ENCODE measurements at regions of chr11 and their contacts with region 1.

Region 1: DNA sequence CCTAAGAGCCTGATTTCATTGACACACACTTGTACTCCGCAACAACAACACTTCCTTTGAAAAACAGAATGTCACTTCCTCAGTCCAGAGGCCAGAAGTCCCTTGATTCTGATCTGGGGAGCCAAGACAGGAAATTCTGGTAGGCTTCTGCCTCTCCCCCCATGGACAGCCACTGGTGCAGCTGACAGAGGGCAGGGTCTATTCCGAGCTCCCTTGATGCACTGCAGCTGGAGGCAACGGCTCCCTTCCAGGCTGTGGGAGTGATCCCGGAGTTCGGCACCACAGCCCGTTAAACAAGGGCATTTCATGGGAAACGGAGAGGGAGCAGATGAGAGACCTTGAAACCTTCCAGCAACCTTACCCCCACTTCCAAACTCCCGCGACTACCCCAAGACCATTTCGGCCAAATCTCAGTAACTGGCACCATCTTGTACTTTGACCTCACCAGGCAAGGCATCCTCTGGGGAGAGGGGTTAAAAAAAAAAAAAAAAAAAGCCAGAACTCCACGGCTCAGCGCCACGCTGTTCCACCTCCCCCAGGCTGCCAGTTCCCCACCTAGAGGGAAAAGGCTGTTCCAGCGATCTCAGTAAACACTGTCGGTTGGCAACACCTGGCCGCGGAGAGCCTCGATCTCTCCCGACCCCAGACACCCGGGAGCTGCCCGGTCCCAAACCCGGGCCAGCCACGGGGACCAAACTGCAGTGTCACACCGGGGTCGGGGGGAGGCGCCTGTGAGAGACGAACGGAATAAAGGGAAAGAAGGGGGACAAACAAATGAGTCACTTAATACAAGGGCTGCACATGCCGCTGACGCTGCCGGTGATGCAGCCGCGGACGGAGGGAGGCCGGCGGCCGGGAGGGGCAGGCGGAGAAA is 1.1 kb downstream of the GAB2 start:
- DNase-seq: peak; percentile 93

Region 2: GRCh38 chr11:78139422-78140391 is 276.8 kb before region 1 on chr11 and contains the start of gene ALG8:
- intact Hi-C with region 1: loop called (anchors 5 kb)
- DNase-seq: peak; percentile 98
- total RNA-seq, gene ALG8: 15.4 TPM

Region 3: GRCh38 chr11:78168539-78169477 is 247.7 kb before region 1 on chr11:
- intact Hi-C with region 1: loop called (anchors 5 kb)
- DNase-seq: peak; percentile 91

Region 4: GRCh38 chr11:78228467-78228866 is 188.1 kb before region 1 on chr11:
- intact Hi-C with region 1: loop called (anchors 2 kb)
- DNase-seq: no peak

Region 5: DNA sequence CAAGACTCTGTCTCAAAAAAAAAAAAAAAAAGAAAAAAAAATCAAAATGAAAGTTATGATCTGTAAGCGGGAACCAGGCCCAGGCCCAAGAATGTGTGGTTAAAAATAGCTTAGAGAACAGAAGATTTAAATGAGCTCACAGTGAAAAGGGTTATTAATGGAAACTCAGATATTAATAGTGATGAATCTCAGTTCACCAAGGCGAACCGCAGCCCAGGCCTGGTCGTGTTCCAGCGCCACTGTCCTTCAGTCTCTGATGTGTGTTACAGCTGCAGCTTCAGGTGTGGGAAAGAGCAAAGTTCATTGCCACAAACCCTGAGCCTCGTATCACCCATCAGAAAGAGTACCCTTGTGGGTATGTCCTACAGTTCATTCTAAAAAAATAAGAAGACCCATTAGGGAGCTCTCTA is 106.0 kb before region 1 on chr11:
- intact Hi-C with region 1: loop called (anchors 5 kb)
- DNase-seq: peak; percentile 87

Region 6: DNA sequence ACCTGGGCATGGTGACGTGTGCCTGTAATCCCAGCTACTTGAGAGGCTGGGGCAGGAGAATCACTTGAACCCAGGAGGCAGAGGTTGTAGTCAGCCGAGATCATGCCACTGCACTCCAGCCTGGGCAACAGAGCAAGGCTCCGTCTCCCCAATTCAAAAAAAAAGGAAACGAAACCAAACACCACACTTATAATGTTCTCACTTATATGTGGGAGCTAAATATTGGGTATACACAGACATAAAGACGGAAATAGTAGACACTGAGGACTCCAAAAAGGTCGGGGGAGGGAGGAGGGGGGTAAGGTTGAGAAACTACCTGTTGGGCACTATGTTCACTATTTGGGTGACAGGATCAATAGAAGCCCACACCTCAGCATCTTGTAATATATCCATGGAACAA is 93.2 kb before region 1 on chr11:
- intact Hi-C with region 1: no loop called
- DNase-seq: no peak

Region 7: DNA sequence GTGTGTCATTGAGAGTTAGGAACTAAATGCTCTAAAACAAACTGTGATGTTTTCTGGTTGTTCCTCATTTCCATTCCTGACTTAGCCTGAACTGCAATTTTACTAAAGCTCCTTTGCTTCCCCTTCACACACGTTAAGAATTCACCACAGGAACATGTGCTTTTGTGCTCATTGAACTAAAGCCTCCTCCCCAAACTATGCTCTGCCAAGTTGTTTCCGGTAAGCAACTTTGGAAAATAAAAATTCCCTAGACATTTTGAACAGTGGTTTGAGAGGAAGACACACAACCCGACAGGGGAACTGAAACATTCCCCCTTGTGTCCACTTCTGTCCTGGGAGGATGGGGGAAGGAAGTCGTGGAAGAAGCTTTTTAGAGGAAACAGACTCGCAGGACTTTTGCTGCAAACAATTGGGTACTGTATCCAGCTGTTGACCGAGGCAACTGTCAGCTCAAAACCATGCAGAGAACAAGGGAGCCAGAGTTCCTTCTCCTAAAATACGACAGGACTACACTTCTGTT is 65.8 kb before region 1 on chr11:
- intact Hi-C with region 1: loop called (anchors 5 kb)
- DNase-seq: no peak

Region 8: DNA sequence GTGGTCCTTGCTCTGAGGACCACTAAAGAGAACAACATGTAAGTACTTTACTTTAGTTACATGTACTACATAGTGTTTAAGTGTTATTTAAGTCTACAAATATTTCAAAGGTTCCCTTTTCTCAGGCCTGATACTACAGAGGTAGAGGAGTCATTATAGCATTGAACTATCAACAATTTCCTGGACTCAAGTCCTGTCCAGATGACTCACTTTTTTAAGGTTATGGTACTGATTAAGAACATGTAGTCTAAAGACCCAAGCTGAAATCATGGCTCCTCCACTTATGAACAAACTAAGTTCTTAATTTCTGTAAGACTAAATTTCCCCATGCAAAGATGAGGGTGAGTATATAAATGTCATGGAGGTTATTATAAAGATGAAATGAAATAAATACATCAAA is 83.4 kb after region 1 on chr11:
- intact Hi-C with region 1: no loop called
- DNase-seq: no peak

Region 9: DNA sequence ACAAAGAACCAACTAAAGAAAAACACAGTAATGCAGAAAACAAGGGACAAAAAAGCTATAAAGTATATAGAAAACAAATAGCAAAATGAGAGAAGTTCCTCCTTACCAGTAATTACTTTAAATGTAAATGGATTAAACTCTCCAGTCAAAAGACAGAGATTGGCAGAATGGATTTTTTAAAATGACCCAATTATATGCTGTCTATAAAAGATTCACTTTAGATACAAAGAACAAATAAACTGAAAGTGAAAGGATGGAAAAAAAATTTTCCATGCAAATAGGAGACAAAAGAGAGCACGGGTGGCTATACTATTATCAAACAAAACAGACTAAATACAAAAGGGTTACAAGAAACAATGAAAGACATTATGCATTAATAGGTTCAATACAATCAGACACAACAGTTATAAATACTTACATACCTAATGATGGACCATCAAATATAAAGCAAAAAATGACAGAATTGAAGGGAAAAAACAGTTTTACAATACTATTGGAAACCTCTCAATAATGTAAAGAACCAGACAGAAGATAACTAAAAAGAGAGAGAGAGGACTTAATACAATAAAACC is 93.6 kb after region 1 on chr11:
- intact Hi-C with region 1: no loop called
- DNase-seq: no peak

Region 10: GRCh38 chr11:78564490-78565467 is 148.2 kb after region 1 on chr11:
- intact Hi-C with region 1: loop called (anchors 5 kb)
- DNase-seq: no peak

Region 11: GRCh38 chr11:78791254-78791653 is 374.7 kb after region 1 on chr11:
- intact Hi-C with region 1: no loop called
- DNase-seq: no peak

Measured in cardiac septum (tissue), 1 donor.